ENCODE measurements at regions of chr16 and their contacts with region 1.

Region 1: GRCh38 chr16:23482778-23483177 is 27.5 kb downstream of the GGA2 start:
- DNase-seq: peak in 8 of 9 experiments; percentile 17 to 94 (median 62)
- ATAC-seq: peak; percentile 83
- H3K4me3 ChIP-seq: no peak overlapping the region
- H3K4me3 Mint-ChIP-seq: peak overlapping the region; percentile 44
- H3K27ac ChIP-seq: peak overlapping the region; percentile 63 to 92
- H3K27ac Mint-ChIP-seq: peak overlapping the region; percentile 94
- H3K4me1 ChIP-seq: no peaks in the 10 kb centered on the region
- H3K4me1 Mint-ChIP-seq: peaks cover 11% of the 10 kb centered on the region
- H3K27me3 ChIP-seq: no peaks in the 10 kb centered on the region
- H3K27me3 Mint-ChIP-seq: no peaks in the 10 kb centered on the region
- CTCF ChIP-seq: no peak

Region 2: GRCh38 chr16:23334457-23334853 is 148.3 kb before region 1 on chr16:
- CTCF ChIA-PET with region 1: no interaction called
- POLR2A ChIA-PET with region 1: no interaction called
- intact Hi-C with region 1: no loop called
- DNase-seq: no peak
- ATAC-seq: no peak
- H3K4me3 ChIP-seq: no peak overlapping the region
- H3K4me3 Mint-ChIP-seq: no peak overlapping the region
- H3K27ac ChIP-seq: no peak overlapping the region
- H3K27ac Mint-ChIP-seq: no peak overlapping the region
- H3K4me1 ChIP-seq: no peaks in the 10 kb centered on the region
- H3K4me1 Mint-ChIP-seq: no peaks in the 10 kb centered on the region
- H3K27me3 ChIP-seq: no peaks in the 10 kb centered on the region
- H3K27me3 Mint-ChIP-seq: peaks cover 3% of the 10 kb centered on the region
- CTCF ChIP-seq: no peak

Region 3: GRCh38 chr16:23504451-23505179 is 21.8 kb after region 1 on chr16:
- CTCF ChIA-PET with region 1: no interaction called
- POLR2A ChIA-PET with region 1: interaction called, 3 read pairs
- intact Hi-C with region 1: loop called (anchors 1 to 2 kb)
- DNase-seq: peak; percentile 38 to 92 (median 71)
- ATAC-seq: peak; percentile 83
- H3K4me3 ChIP-seq: no peak overlapping the region
- H3K4me3 Mint-ChIP-seq: peak overlapping the region; percentile 45
- H3K27ac ChIP-seq: peak overlapping the region; percentile 16 to 77
- H3K27ac Mint-ChIP-seq: peak overlapping the region; percentile 94
- H3K4me1 ChIP-seq: peaks cover 53% of the 10 kb centered on the region
- H3K4me1 Mint-ChIP-seq: peaks cover 74% of the 10 kb centered on the region
- H3K27me3 ChIP-seq: no peaks in the 10 kb centered on the region
- H3K27me3 Mint-ChIP-seq: no peaks in the 10 kb centered on the region
- CTCF ChIP-seq: no peak

Measured in CD8-positive, alpha-beta T cell (primary cell).